Heart right ventricle (tissue), 16 donors: ENCODE measurements at regions of chr13 and their contacts with region 1.

Region 1: GRCh38 chr13:77362166-77362565 is 35.3 kb upstream of the MYCBP2 start:
- DNase-seq: no peak
- ATAC-seq: no peak
- H3K4me3 ChIP-seq: no peak overlapping the region
- H3K27ac ChIP-seq: no peak overlapping the region
- H3K4me1 ChIP-seq: peaks cover 0 to 7% (median 0%) of the 10 kb centered on the region in 9 donors
- H3K27me3 ChIP-seq: peaks cover 0 to 10% (median 0%) of the 10 kb centered on the region in 7 donors
- CTCF ChIP-seq: no peak

Region 2: GRCh38 chr13:77351315-77351714 is 10.9 kb before region 1 on chr13:
- intact Hi-C with region 1: loop called in 1 of 10 experiments (anchors 1 kb)
- DNase-seq: no peak
- ATAC-seq: no peak
- H3K4me3 ChIP-seq: no peak overlapping the region
- H3K27ac ChIP-seq: no peak overlapping the region
- H3K4me1 ChIP-seq: peaks cover 0 to 29% (median 0%) of the 10 kb centered on the region in 9 donors
- H3K27me3 ChIP-seq: peaks cover 0 to 5% (median 0%) of the 10 kb centered on the region in 7 donors
- CTCF ChIP-seq: no peak